Gastrocnemius medialis (tissue), 4 donors: ENCODE measurements at regions of chr2 and their contacts with region 1.

Region 1: DNA sequence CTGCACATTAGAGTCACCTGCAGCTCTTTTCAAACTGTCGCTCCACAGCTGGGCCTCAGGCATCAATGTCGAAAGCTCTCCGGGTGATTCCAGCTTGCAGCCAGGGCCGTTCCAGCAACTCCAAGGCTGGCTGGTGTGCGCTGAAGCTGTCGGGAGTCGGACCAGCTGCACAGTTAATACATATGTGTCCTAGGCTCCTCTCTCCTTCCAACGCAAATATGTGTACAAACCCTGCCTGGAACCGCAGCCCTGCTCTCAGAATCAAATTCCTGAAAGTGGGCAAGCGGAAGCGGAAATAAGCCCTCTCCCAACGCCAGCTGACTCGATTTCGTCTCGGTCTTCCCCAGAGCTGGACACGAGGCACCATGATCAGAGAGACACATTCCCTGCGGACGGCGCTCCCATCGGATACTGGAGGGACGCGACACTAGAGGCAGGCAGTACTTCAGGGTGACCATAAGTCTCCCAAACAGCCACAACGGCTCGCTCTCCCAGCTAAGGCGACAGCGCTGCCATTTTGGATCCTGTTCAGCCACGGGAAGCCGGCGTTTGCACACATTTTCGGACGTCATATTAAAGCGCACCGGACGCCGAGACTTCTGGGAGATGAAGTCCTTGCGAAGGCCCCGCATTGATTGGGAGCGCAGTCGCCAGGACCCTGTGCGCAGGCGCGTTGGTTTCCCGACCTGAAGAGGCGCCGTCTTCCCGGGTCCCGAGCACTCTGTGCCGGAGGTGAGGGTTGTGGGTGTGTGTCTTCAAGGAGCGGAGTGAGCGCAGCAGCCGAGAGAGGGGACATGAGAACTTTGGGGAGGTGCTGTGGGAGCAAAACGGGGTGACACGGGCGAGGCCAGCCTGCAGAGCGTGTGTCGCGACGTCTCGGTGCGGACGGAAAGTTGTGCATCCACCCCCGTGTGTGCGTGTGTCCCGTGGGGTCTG is at the start of gene ZNF2:
- DNase-seq: peak; percentile 97
- ATAC-seq: peak; percentile 99 to 100
- H3K4me3 ChIP-seq: peak within 1 kb of the TSS; percentile 65 to 96 (median 90)
- H3K27ac ChIP-seq: peak within 1 kb of the TSS; percentile 90 to 95 (median 94)
- H3K4me1 ChIP-seq: peaks cover 22 to 26% of the 10 kb centered on the region in 2 donors
- H3K27me3 ChIP-seq: no peaks in the 10 kb centered on the region
- CTCF ChIP-seq: peak in 1 of 5 experiments; percentile 17
- POLR2A ChIP-seq: peak; percentile 61 to 63
- total RNA-seq, gene ZNF2: 2.4 to 3.6 (median 2.9) TPM

Region 2: DNA sequence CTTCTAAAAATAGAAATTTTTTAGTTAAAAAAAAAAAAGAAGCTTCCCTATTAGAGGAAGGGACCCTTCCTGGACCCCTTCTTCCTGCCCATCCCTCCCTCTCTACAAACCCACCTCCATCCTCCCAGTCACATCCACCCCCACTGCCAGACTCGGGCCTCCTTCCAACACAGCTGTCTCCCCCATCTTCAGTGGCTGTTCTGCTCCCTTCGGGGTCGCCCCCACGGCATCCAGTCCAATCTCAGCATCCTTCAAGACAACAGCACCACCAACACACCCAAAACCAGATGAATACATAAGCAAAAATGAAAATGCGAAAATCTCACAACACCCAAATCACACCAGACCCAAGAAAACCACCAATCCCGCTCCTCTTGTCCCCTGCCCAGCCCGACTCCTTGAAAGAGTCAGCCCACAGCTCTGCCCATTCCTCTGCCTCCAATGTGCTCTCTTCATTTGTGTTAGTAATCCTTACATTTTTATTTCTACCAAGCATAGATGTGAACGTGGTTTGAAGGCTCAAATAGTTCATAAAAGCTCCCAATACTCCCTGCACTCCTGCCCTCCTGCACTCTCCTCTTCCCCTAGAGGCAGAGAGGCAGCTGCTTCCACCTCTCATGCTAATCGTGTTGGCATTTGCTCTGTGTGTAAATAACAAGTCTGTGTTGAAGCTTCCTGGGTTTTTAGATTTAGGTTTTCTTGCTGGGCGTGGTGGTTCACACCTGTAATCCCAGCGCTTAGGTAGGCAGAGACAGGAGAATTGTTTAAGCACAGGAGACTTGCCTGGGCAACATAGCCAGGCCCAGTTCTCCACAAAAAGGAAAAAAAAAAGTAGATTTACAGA is 102.9 kb before region 1 on chr2:
- in situ Hi-C with region 1: no loop called
- intact Hi-C with region 1: no loop called
- DNase-seq: no peak
- ATAC-seq: no peak
- H3K4me3 ChIP-seq: no peak overlapping the region
- H3K27ac ChIP-seq: no peak overlapping the region
- H3K4me1 ChIP-seq: no peaks in the 10 kb centered on the region
- H3K27me3 ChIP-seq: peaks cover 0 to 3% (median 2%) of the 10 kb centered on the region in 3 donors
- CTCF ChIP-seq: no peak
- POLR2A ChIP-seq: no peak

Region 3: GRCh38 chr2:95207111-95207961 is 41.9 kb after region 1 on chr2 and contains the start of gene ZNF892:
- in situ Hi-C with region 1: loop called in 1 of 4 experiments (anchors 5 kb)
- intact Hi-C with region 1: loop called (anchors 1 kb)
- DNase-seq: peak; percentile 88 to 90
- ATAC-seq: peak; percentile 96 to 97
- H3K4me3 ChIP-seq: peak within 1 kb of the TSS; percentile 62 to 79 (median 70)
- H3K27ac ChIP-seq: peak within 1 kb of the TSS; percentile 81 to 88 (median 84)
- H3K4me1 ChIP-seq: peaks cover 14 to 16% of the 10 kb centered on the region in 2 donors
- H3K27me3 ChIP-seq: no peaks in the 10 kb centered on the region
- CTCF ChIP-seq: peak; percentile 10 to 56 (median 38)
- POLR2A ChIP-seq: peak; percentile 35 to 45
- total RNA-seq, gene ZNF892: 1.5 to 4.5 (median 2.1) TPM